ENCODE measurements at regions of chr4 and their contacts with region 1.

Region 1: DNA sequence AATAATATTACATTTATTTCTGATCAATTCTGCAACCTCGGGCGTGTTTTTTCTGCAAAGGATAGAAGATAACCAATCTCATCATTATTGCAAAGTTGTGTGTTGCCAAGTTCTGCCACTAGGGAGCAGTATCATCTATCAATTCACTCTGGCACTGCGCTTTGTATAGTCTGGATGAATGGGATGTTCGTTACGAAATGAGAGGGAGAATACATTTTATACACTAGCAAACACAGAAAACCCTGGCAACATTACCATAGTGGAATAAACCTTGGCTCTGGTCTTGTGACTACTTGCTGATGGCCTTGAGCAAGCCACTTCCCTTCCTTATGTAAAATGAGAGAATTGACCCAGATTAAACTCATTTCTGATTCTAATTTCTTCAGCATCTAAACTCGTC is 97.5 kb upstream of the ZNF518B start:
- DNase-seq: peak; percentile 64
- ATAC-seq: peak; percentile 36
- H3K4me3 Mint-ChIP-seq: no peak overlapping the region
- H3K27ac Mint-ChIP-seq: no peak overlapping the region
- H3K4me1 Mint-ChIP-seq: no peaks in the 10 kb centered on the region
- H3K27me3 Mint-ChIP-seq: peaks cover 16% of the 10 kb centered on the region

Region 2: DNA sequence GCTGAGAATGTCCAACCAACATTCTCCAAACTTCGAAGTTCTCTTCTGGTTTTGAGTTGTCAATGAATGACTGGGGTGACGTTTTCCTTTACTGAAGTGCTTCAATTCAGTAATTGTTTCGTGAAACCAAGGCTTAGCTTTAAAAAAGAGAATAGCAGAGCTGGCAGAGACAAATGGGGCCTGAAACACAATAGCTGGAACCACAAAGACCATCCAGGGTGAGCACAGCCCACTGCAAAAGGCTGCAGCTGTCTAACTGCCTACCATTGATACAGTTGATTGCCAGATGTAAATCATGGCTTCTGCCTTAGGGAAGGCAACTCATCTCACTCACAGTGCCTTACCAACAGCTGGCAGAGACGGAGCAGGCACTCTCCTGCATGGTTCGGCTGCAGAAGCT is 18.8 kb before region 1 on chr4:
- CTCF ChIA-PET with region 1: interaction called, 14 read pairs
- POLR2A ChIA-PET with region 1: no interaction called
- DNase-seq: no peak
- ATAC-seq: no peak
- H3K4me3 Mint-ChIP-seq: no peak overlapping the region
- H3K27ac Mint-ChIP-seq: no peak overlapping the region
- H3K4me1 Mint-ChIP-seq: no peaks in the 10 kb centered on the region
- H3K27me3 Mint-ChIP-seq: peaks cover 14% of the 10 kb centered on the region

Measured in activated CD8-positive, alpha-beta T cell treated with anti-CD3 and anti-CD28 coated beads, Interleukin-2, amount 10 ng/mL, durations not matched to agents 7 days and 5 days (primary cell).